ENCODE measurements at regions of chr2 and their contacts with region 1.

Region 1: DNA sequence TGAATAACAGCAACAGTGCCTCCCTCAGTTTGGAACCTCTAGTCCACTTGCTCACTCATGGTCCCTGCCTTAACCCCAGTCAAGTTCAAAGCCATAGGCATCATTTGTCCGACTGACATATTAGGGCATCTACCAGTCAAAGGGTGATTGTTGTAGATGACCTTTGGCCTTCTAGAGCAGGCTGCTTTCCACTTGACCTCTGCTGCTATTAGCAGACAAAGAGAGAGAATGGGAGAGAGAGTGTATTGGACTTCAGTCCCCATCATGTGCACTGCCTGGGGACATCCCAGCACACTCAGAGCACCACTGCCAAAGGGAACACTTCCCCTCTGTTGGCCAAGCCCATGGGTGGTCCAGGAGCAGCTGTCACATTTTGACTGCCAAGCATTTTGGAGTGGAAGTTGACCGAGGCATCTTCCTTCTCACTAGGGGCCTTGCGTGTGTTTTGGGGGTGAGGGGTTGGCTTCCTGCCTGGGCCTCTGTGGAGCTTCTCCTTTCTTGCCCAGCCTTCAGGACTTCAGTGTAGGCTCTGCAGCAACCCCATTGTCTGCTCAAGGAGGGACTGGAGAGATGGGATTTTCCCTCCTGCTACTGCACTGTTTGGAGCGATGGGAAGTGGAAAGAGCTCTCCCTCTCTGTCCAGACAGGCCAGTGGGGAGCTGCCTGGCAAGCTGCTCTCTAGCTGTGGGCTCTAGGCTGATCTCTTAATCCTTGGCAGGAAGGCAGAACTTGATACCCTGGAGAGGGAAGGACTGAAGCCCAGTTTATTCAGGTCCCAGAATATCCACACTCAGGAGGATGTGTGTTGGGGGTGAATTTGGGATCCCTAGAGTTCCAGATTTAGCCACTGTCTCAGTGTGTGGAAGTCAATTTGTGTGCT is 68.1 kb downstream of the TMEM247 start:
- DNase-seq: peak; percentile 48
- ATAC-seq: peak; percentile 24 to 51

Region 2: DNA sequence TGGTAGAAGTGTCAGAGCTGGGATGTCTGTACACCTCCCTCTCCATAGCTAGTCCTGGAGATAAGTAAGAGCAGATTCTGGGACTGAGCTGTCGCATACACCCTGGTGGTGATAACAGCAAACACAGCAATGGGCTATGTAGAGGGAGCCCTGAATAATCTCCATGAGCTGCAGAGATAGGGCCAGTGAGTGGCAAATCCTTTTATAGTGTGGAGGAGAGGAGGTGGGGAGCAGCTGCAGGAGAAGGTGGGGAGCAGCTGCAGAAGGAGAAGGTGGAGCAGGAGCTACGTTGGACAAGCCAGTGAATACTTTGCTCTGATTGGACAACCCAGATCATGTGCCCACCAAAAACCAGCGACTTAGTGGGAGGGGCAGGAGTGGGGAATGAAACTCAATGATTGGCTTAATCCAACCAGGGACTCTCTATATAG is 17.4 kb after region 1 on chr2:
- intact Hi-C with region 1: loop called in 1 of 2 experiments (anchors 2 kb)
- DNase-seq: peak; percentile 38
- ATAC-seq: peak; percentile 84

Region 3: GRCh38 chr2:46769809-46770208 is 222.3 kb after region 1 on chr2:
- intact Hi-C with region 1: no loop called
- DNase-seq: no peak
- ATAC-seq: no peak